ENCODE measurements at regions of chrX and their contacts with region 1.

Region 1: GRCh38 chrX:48696301-48697181 is at the start of gene SUV39H1:
- DNase-seq: peak; percentile 66 to 95 (median 80)
- ATAC-seq: peak; percentile 93
- H3K4me3 ChIP-seq: peak within 1 kb of the TSS; percentile 65
- H3K4me3 Mint-ChIP-seq: peak within 1 kb of the TSS; percentile 98
- H3K27ac ChIP-seq: peak within 1 kb of the TSS; percentile 72 to 75
- H3K27ac Mint-ChIP-seq: peak within 1 kb of the TSS; percentile 98
- H3K4me1 ChIP-seq: peaks cover 17% of the 10 kb centered on the region
- H3K4me1 Mint-ChIP-seq: peaks cover 24% of the 10 kb centered on the region
- H3K27me3 ChIP-seq: no peaks in the 10 kb centered on the region
- H3K27me3 Mint-ChIP-seq: no peaks in the 10 kb centered on the region
- CTCF ChIP-seq: no peak
- total RNA-seq, gene SUV39H1: 7.7 to 8.4 TPM

Region 2: GRCh38 chrX:48683411-48683982 is 13.0 kb before region 1 on chrX and contains the start of gene WAS:
- CTCF ChIA-PET with region 1: no interaction called
- POLR2A ChIA-PET with region 1: interaction called, 22 read pairs
- intact Hi-C with region 1: loop called in 1 of 2 experiments (anchors 2 kb)
- DNase-seq: peak in 12 of 14 experiments; percentile 14 to 76 (median 36)
- ATAC-seq: peak; percentile 85
- H3K4me3 ChIP-seq: peak within 1 kb of the TSS; percentile 82
- H3K4me3 Mint-ChIP-seq: peak within 1 kb of the TSS; percentile 95
- H3K27ac ChIP-seq: peak within 1 kb of the TSS; percentile 73 to 83
- H3K27ac Mint-ChIP-seq: peak within 1 kb of the TSS; percentile 96
- H3K4me1 ChIP-seq: peaks cover 61% of the 10 kb centered on the region
- H3K4me1 Mint-ChIP-seq: peaks cover 50% of the 10 kb centered on the region
- H3K27me3 ChIP-seq: no peaks in the 10 kb centered on the region
- H3K27me3 Mint-ChIP-seq: no peaks in the 10 kb centered on the region
- CTCF ChIP-seq: no peak
- total RNA-seq, gene WAS: 63.7 to 67.4 TPM

Region 3: GRCh38 chrX:48715072-48715471 is 18.5 kb after region 1 on chrX:
- CTCF ChIA-PET with region 1: no interaction called
- POLR2A ChIA-PET with region 1: interaction called, 20 read pairs
- intact Hi-C with region 1: no loop called
- DNase-seq: peak in 1 of 14 experiments; percentile 29
- ATAC-seq: peak; percentile 22
- H3K4me3 ChIP-seq: no peak overlapping the region
- H3K4me3 Mint-ChIP-seq: peak overlapping the region; percentile 26
- H3K27ac ChIP-seq: no peak overlapping the region
- H3K27ac Mint-ChIP-seq: peak overlapping the region; percentile 93
- H3K4me1 ChIP-seq: peaks cover 80% of the 10 kb centered on the region
- H3K4me1 Mint-ChIP-seq: peaks cover 86% of the 10 kb centered on the region
- H3K27me3 ChIP-seq: no peaks in the 10 kb centered on the region
- H3K27me3 Mint-ChIP-seq: no peaks in the 10 kb centered on the region
- CTCF ChIP-seq: no peak

Region 4: GRCh38 chrX:49111791-49112190 is 415.2 kb after region 1 on chrX:
- CTCF ChIA-PET with region 1: no interaction called
- POLR2A ChIA-PET with region 1: no interaction called
- intact Hi-C with region 1: no loop called
- DNase-seq: no peak
- ATAC-seq: no peak
- H3K4me3 ChIP-seq: no peak overlapping the region
- H3K4me3 Mint-ChIP-seq: no peak overlapping the region
- H3K27ac ChIP-seq: no peak overlapping the region
- H3K27ac Mint-ChIP-seq: no peak overlapping the region
- H3K4me1 ChIP-seq: peaks cover 9% of the 10 kb centered on the region
- H3K4me1 Mint-ChIP-seq: peaks cover 8% of the 10 kb centered on the region
- H3K27me3 ChIP-seq: no peaks in the 10 kb centered on the region
- H3K27me3 Mint-ChIP-seq: no peaks in the 10 kb centered on the region
- CTCF ChIP-seq: no peak

Region 5: GRCh38 chrX:50333308-50333707 is 1636.8 kb after region 1 on chrX:
- CTCF ChIA-PET with region 1: no interaction called
- POLR2A ChIA-PET with region 1: no interaction called
- intact Hi-C with region 1: no loop called
- DNase-seq: no peak
- ATAC-seq: no peak
- H3K4me3 ChIP-seq: no peak overlapping the region
- H3K4me3 Mint-ChIP-seq: no peak overlapping the region
- H3K27ac ChIP-seq: no peak overlapping the region
- H3K27ac Mint-ChIP-seq: no peak overlapping the region
- H3K4me1 ChIP-seq: no peaks in the 10 kb centered on the region
- H3K4me1 Mint-ChIP-seq: no peaks in the 10 kb centered on the region
- H3K27me3 ChIP-seq: no peaks in the 10 kb centered on the region
- H3K27me3 Mint-ChIP-seq: no peaks in the 10 kb centered on the region
- CTCF ChIP-seq: no peak

Measured in CD4-positive, alpha-beta T cell (primary cell).